ENCODE measurements at regions of chr3 and their contacts with region 1.

Region 1: DNA sequence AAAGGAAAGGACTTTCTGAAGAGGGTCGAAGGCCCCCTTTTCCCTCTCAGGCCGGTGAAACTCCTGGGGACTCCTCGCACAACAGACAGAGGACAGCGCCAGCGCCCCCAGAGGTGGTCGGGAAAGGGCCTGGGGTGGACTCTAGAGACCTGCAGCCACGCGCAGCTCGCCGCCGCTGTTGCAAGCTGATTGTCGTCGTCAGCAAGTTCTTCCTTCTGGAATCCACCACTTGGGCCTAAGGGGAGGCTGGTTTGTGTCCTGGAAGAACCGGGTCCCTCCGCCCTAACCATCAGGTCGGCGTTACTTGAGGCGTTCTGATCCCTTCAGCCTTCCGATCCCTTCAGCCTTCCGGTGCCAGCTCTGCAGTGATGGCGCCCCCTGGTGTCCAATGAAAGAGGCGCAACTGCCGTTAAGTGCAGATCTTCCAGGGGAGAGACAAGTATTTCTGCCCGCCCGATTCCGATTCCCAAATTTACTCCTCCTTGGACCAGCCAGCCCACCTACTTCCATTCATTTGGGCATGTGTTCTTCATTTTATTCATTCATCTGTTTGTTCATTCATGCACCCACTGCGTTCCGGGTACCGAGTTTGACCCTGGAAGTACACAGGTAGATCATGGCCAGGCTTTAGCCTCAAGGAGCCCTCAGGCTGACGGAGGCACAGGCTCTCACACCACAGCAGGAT is 77.2 kb upstream of the SLC6A11 start:
- DNase-seq: peak; percentile 63 to 91
- H3K4me3 ChIP-seq: peak overlapping the region; percentile 26 to 63 (median 57); a peak in 7 of 8 replicates
- H3K27ac ChIP-seq: no peak overlapping the region
- H3K4me1 ChIP-seq: no peaks in the 10 kb centered on the region
- H3K27me3 ChIP-seq: peaks cover 0 to 6% (median 3%) of the 10 kb centered on the region in 4 experiments; a peak in 4 of 7 replicates
- CTCF ChIP-seq: peak; percentile 53 to 68 (median 64)
- EP300 ChIP-seq: no peak
- POLR2A ChIP-seq: no peak
- RAD21 ChIP-seq: peak; percentile 60 to 62

Region 2: GRCh38 chr3:10334459-10334858 is 404.4 kb before region 1 on chr3:
- CTCF ChIA-PET with region 1: interaction called, 11 read pairs
- POLR2A ChIA-PET with region 1: no interaction called
- DNase-seq: no peak
- H3K4me3 ChIP-seq: no peak overlapping the region
- H3K27ac ChIP-seq: no peak overlapping the region
- H3K4me1 ChIP-seq: peaks cover 0 to 2% (median 0%) of the 10 kb centered on the region in 4 experiments; a peak in 1 of 7 replicates
- H3K27me3 ChIP-seq: no peaks in the 10 kb centered on the region; a peak in 2 of 7 replicates
- CTCF ChIP-seq: peak in 2 of 3 experiments; percentile 48 to 50; a peak in 3 of 4 replicates
- EP300 ChIP-seq: no peak
- POLR2A ChIP-seq: no peak
- RAD21 ChIP-seq: peak in 1 of 2 experiments; percentile 36; a peak in 2 of 4 replicates

Region 3: DNA sequence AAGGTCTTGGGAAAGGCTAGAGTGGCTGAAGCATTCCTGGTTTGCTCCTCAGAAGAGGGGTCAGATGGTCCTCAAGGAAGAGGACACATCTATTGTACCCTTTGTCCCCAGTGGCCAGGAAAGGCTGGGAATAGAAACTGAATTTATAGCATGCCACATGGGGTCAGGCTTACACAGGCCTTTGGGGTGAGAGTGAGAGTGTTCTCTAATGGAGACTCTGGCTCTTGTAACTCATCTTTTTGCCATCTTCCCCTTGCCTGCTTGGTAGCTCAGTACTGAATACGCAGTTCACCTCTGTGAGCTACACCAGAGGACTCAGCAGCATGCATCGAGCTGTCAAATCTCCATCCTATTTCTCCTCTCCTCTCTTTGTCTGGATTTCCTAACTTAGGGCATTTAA is 321.0 kb before region 1 on chr3:
- CTCF ChIA-PET with region 1: interaction called, 11 read pairs
- POLR2A ChIA-PET with region 1: no interaction called
- DNase-seq: no peak
- H3K4me3 ChIP-seq: no peak overlapping the region
- H3K27ac ChIP-seq: no peak overlapping the region
- H3K4me1 ChIP-seq: no peaks in the 10 kb centered on the region
- H3K27me3 ChIP-seq: no peaks in the 10 kb centered on the region
- CTCF ChIP-seq: peak in 2 of 3 experiments; percentile 39 to 41; a peak in 3 of 4 replicates
- EP300 ChIP-seq: no peak
- POLR2A ChIP-seq: no peak
- RAD21 ChIP-seq: peak; percentile 62 to 66

Region 4: GRCh38 chr3:10703875-10704274 is 35.0 kb before region 1 on chr3:
- CTCF ChIA-PET with region 1: interaction called, 22 read pairs
- POLR2A ChIA-PET with region 1: no interaction called
- DNase-seq: peak; percentile 49 to 66
- H3K4me3 ChIP-seq: no peak overlapping the region
- H3K27ac ChIP-seq: no peak overlapping the region
- H3K4me1 ChIP-seq: peaks cover 2 to 10% (median 6%) of the 10 kb centered on the region in 4 experiments
- H3K27me3 ChIP-seq: peaks cover 8 to 39% (median 31%) of the 10 kb centered on the region in 4 experiments
- CTCF ChIP-seq: peak; percentile 78 to 87 (median 79)
- EP300 ChIP-seq: peak in 1 of 2 experiments; percentile 84; a peak in 1 of 3 replicates
- POLR2A ChIP-seq: no peak
- RAD21 ChIP-seq: peak; percentile 90 to 95

Region 5: GRCh38 chr3:10722911-10723310 is 15.9 kb before region 1 on chr3:
- CTCF ChIA-PET with region 1: interaction called, 16 read pairs
- POLR2A ChIA-PET with region 1: no interaction called
- DNase-seq: no peak
- H3K4me3 ChIP-seq: no peak overlapping the region
- H3K27ac ChIP-seq: no peak overlapping the region
- H3K4me1 ChIP-seq: 0 out of 7 replicates have a peak, but pooled peaks cover 0 to 2% (median 0%) of the 10 kb centered on the region in 4 experiments
- H3K27me3 ChIP-seq: no peaks in the 10 kb centered on the region
- CTCF ChIP-seq: no peak
- EP300 ChIP-seq: no peak
- POLR2A ChIP-seq: no peak
- RAD21 ChIP-seq: no peak

Measured in H1 (cell line).